ENCODE measurements at regions of chr14 and their contacts with region 1.

Region 1: GRCh38 chr14:105375635-105376057 is 22.7 kb upstream of the TEX22 start:
- DNase-seq: peak in 3 of 9 experiments; percentile 24 to 50 (median 35)
- ATAC-seq: peak; percentile 43
- H3K4me3 ChIP-seq: no peak overlapping the region
- H3K4me3 Mint-ChIP-seq: no peak overlapping the region
- H3K27ac ChIP-seq: no peak overlapping the region
- H3K27ac Mint-ChIP-seq: no peak overlapping the region
- H3K4me1 ChIP-seq: peaks cover 13% of the 10 kb centered on the region
- H3K4me1 Mint-ChIP-seq: peaks cover 12% of the 10 kb centered on the region
- H3K27me3 ChIP-seq: peaks cover 0 to 2% of the 10 kb centered on the region in 2 experiments
- H3K27me3 Mint-ChIP-seq: no peaks in the 10 kb centered on the region
- CTCF ChIP-seq: no peak

Region 2: GRCh38 chr14:105398044-105398725 is 22.5 kb after region 1 on chr14 and contains the start of gene TEX22:
- CTCF ChIA-PET with region 1: interaction called, 12 read pairs
- POLR2A ChIA-PET with region 1: interaction called, 3 read pairs
- intact Hi-C with region 1: loop called (anchors 1 to 2 kb)
- DNase-seq: peak; percentile 73 to 97 (median 90)
- ATAC-seq: peak; percentile 90
- H3K4me3 ChIP-seq: peak within 1 kb of the TSS; percentile 63 to 76
- H3K4me3 Mint-ChIP-seq: peak within 1 kb of the TSS; percentile 79
- H3K27ac ChIP-seq: peak within 1 kb of the TSS; percentile 71
- H3K27ac Mint-ChIP-seq: peak within 1 kb of the TSS; percentile 78
- H3K4me1 ChIP-seq: peaks cover 22% of the 10 kb centered on the region
- H3K4me1 Mint-ChIP-seq: peaks cover 15% of the 10 kb centered on the region
- H3K27me3 ChIP-seq: no peaks in the 10 kb centered on the region
- H3K27me3 Mint-ChIP-seq: no peaks in the 10 kb centered on the region
- CTCF ChIP-seq: no peak
- total RNA-seq, gene TEX22: 1.1 TPM in 1 of 2 experiments, not detected in the other

Region 3: DNA sequence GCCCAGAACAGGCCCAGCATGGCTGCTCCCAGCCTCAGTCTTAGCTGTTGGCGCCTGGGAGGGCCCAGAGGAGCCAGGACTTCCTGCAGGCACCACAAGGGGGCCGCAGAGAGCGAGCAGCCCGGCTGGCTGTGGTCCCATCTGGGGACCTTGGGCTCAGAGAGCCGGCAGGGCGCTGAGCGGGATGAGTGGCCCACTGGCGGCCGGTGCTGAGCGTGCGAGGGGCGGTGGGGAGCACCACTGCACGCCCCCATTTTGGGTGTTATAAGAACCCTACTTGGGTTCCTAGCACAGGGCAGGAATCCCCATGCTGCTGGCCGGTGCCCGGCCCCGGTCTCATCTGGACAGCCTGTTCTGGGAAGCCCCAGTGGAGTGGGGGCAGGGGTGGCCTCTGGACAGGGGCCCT is 73.1 kb after region 1 on chr14:
- CTCF ChIA-PET with region 1: interaction called, 6 read pairs
- POLR2A ChIA-PET with region 1: interaction called, 5 read pairs
- intact Hi-C with region 1: loop called (anchors 1 kb)
- DNase-seq: peak; percentile 49 to 77 (median 72)
- ATAC-seq: peak; percentile 99
- H3K4me3 ChIP-seq: no peak overlapping the region
- H3K4me3 Mint-ChIP-seq: no peak overlapping the region
- H3K27ac ChIP-seq: no peak overlapping the region
- H3K27ac Mint-ChIP-seq: no peak overlapping the region
- H3K4me1 ChIP-seq: no peaks in the 10 kb centered on the region
- H3K4me1 Mint-ChIP-seq: no peaks in the 10 kb centered on the region
- H3K27me3 ChIP-seq: no peaks in the 10 kb centered on the region
- H3K27me3 Mint-ChIP-seq: no peaks in the 10 kb centered on the region
- CTCF ChIP-seq: peak; percentile 76

Region 4: DNA sequence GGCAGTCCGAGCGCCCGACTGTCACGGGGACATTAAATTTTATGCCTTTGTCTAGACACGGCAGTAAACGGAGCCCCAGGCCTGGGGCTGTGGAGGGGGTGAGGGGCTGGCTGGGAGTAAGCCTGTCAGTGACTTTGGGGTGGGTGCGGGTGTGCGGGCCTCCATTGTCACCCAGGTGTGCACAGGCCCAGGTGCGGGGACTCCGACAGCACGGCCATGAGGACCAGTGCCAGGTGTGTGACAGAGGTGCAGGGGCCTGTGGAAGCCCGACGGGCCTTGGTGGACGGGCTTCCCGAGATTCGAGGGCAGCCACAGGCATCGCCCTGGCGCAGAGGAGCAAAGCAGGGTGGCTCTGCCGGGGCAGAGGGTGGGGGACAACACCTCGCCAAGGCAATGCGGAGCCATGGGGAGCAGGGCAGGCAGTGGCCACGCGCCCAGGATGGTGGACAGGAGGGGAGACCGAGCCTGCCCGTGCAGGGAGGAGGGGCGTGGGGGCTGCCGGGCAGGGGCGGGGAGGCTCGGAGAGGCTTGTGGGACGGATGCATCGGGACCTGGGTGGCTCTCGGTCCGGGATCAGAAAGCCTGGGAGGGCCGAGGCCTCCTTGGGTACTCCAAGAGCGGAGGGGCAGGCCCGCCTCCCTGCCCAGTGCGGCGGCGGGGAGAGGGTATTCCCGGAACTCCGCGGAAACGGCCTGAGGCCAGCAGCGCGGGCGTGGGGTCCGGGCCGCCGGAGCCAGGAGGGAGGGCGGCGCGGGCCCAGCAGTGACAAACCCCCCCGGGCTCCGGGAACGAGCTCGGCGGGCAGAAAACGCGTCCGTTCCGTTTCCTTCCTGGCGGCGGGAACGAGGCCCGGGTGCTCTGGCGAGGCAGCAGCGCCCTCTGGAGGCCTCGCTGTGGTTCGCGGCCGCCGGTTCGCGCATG is 152.3 kb after region 1 on chr14:
- CTCF ChIA-PET with region 1: interaction called, 24 read pairs
- POLR2A ChIA-PET with region 1: no interaction called
- intact Hi-C with region 1: loop called (anchors 1 kb)
- DNase-seq: peak; percentile 66 to 89 (median 79)
- ATAC-seq: peak; percentile 69
- H3K4me3 ChIP-seq: peak overlapping the region; percentile 38 to 66
- H3K4me3 Mint-ChIP-seq: peak overlapping the region; percentile 75
- H3K27ac ChIP-seq: no peak overlapping the region
- H3K27ac Mint-ChIP-seq: no peak overlapping the region
- H3K4me1 ChIP-seq: peaks cover 32% of the 10 kb centered on the region
- H3K4me1 Mint-ChIP-seq: peaks cover 18% of the 10 kb centered on the region
- H3K27me3 ChIP-seq: peaks cover 4 to 24% of the 10 kb centered on the region in 2 experiments
- H3K27me3 Mint-ChIP-seq: peaks cover 7% of the 10 kb centered on the region
- CTCF ChIP-seq: peak; percentile 73